ENCODE measurements at regions of chr14 and their contacts with region 1.

Region 1: GRCh38 chr14:93892923-93893558 is 34.1 kb upstream of the FAM181A start:
- DNase-seq: peak; percentile 36 to 93 (median 75)
- ATAC-seq: peak in 3 of 4 donors; percentile 79 to 92 (median 83)
- H3K4me3 ChIP-seq: no peak overlapping the region
- H3K27ac ChIP-seq: no peak overlapping the region
- H3K4me1 ChIP-seq: no peaks in the 10 kb centered on the region
- H3K27me3 ChIP-seq: no peaks in the 10 kb centered on the region
- CTCF ChIP-seq: peak; percentile 96 to 98 (median 98)

Region 2: DNA sequence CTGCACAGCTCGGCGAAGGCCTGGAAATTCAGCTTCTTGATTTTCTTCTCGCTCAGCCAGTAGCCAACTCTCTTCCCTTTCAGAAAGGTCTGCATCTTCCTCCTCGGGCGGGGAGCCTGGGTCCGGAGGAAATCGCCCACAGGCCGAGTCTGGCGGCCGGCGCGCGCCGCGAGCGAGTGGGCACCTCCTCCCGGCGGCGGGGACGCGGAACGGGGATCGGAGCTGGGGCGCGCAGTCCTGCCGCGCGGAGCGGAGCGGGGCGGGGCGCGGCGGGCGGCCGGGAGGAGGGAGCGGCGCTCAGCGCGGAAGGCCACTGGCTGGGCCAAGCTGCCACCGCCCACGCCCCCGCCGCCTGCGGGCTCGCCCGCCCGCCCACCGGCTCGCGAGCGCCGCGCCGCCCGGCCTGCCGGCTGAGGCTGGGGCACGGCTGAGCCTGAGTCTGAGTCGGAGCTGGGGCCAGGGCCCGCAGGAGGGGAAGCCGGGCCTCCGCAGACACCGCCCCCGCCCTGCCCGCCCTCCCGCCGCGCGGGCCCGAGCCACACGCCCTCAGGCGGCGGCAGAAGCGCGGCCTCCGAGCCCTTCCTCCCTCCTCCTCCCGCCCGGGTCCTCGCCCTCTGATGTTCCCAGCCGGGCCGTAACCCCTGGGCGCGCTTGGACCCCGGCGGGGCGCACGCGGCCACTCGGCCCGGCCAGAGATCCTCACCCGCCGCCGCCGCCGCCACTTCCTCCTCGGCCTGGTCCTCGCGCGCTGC is 777.8 kb before region 1 on chr14:
- intact Hi-C with region 1: no loop called
- DNase-seq: peak; percentile 89 to 95 (median 90)
- ATAC-seq: peak; percentile 81 to 90 (median 88)
- H3K4me3 ChIP-seq: peak overlapping the region; percentile 83 to 92 (median 88)
- H3K27ac ChIP-seq: peak overlapping the region; percentile 81 to 98 (median 93)
- H3K4me1 ChIP-seq: peaks cover 6 to 23% (median 7%) of the 10 kb centered on the region in 3 donors
- H3K27me3 ChIP-seq: no peaks in the 10 kb centered on the region
- CTCF ChIP-seq: no peak

Region 3: DNA sequence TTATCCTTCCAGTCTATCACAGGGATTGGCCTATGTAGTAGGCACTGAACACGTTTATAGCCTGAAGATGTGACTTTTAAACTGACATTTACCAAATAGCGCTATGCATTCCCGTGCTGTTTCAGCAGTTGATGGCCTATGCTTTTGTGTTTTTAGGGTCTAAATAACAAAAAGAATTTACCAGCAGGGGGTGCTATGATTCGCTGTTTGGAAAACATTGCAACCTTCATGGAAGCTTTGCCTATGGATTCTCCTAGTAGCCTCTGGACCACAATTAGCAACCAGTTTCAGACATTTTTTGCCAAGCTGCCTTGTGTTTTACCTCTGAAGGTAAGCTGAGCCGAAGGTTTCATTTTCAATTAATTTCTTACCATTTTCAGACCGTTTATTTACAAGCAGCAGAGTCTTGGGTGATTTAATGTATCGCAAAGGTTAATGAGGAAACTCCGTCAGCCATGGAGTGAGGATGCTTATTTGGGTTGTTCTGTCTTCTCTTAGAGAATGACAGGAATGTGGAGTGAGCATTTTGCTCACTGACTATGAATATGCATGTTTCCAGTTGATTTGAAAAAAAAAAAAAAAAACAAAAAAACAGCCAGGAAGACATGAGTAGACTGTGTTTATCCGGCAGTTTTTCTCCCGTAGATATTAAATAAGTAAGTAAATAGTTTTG is 237.8 kb before region 1 on chr14:
- intact Hi-C with region 1: loop called in 1 of 3 experiments (anchors 5 kb)
- DNase-seq: peak in 1 of 6 donors; percentile 11
- ATAC-seq: peak in 2 of 4 donors; percentile 52 to 55
- H3K4me3 ChIP-seq: no peak overlapping the region
- H3K27ac ChIP-seq: no peak overlapping the region
- H3K4me1 ChIP-seq: no peaks in the 10 kb centered on the region
- H3K27me3 ChIP-seq: no peaks in the 10 kb centered on the region
- CTCF ChIP-seq: peak in 2 of 4 donors; percentile 33 to 40

Region 4: DNA sequence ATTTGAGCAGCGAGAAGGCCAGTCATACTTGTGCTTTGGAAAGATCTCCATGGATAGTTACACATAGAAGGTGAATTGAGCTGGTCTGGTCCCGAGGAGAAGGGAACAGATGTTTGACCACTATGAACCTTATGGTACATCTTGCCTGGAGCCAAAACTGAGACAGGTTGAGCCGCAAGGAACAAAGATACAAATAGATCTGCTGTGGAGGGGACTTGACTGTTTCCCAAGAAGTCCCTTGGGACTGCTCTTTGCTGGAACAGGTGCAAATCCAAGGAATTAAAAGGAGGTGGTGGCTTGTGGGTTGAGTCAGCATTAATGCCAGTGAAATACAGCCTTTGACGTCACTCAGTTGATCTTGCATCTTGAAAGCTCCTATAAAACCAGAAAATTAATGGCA is 36.0 kb before region 1 on chr14:
- intact Hi-C with region 1: no loop called
- DNase-seq: no peak
- ATAC-seq: no peak
- H3K4me3 ChIP-seq: no peak overlapping the region
- H3K27ac ChIP-seq: no peak overlapping the region
- H3K4me1 ChIP-seq: no peaks in the 10 kb centered on the region
- H3K27me3 ChIP-seq: peaks cover 0 to 2% (median 0%) of the 10 kb centered on the region in 4 donors
- CTCF ChIP-seq: no peak

Region 5: DNA sequence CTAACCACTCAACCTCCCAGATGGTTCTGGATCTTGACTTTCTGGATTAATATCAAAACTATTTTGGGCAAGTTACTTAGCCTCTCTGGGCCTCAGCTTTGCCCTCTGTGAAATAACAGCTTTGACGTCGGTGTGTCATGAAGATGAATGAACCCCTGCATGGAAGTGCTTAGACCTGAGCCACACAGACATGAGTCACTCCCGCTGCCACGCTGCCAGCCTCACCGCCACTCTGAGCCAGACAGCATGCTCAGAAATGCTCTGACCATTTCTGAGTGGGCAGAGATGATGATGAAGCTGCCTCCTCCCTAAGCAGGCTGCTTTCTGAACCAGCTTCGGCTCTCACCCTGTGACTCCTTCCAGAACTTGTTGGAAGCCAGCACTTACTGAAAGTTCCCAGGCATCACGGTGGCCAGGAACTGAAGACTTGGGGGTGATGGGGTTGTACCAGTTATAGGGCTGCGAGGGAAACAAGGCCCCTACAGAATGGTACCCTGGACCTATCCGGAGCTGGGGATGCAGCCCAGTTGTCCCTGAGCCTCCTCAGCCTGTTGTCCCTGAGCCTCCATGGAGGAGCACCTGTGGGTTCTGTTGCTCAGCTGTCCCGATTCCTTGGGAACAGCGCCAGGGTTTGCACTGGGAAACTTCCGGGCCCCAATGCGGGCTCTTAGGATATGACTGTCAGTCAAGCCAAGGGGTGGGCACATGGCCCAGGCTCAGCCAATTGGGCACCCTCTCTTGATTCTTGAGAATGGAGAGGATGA is 102.1 kb after region 1 on chr14:
- intact Hi-C with region 1: no loop called
- DNase-seq: peak in 4 of 6 donors; percentile 55 to 77 (median 68)
- ATAC-seq: peak; percentile 71 to 83 (median 74)
- H3K4me3 ChIP-seq: no peak overlapping the region
- H3K27ac ChIP-seq: no peak overlapping the region
- H3K4me1 ChIP-seq: no peaks in the 10 kb centered on the region
- H3K27me3 ChIP-seq: no peaks in the 10 kb centered on the region
- CTCF ChIP-seq: no peak